Left cardiac atrium (tissue), 4 donors: ENCODE measurements at regions of chr4 and their contacts with region 1.

Region 1: GRCh38 chr4:104064646-104065577 is 345.1 kb upstream of the TACR3 start:
- DNase-seq: peak; percentile 28
- ATAC-seq: peak; percentile 60 to 80

Region 2: GRCh38 chr4:103982454-103982853 is 82.5 kb before region 1 on chr4:
- intact Hi-C with region 1: no loop called
- DNase-seq: no peak
- ATAC-seq: no peak

Region 3: GRCh38 chr4:104457308-104457981 is 392.5 kb after region 1 on chr4:
- intact Hi-C with region 1: no loop called
- DNase-seq: no peak
- ATAC-seq: no peak

Region 4: GRCh38 chr4:104531390-104531789 is 466.5 kb after region 1 on chr4:
- intact Hi-C with region 1: loop called in 1 of 2 experiments (anchors 5 kb)
- DNase-seq: no peak
- ATAC-seq: no peak

Region 5: DNA sequence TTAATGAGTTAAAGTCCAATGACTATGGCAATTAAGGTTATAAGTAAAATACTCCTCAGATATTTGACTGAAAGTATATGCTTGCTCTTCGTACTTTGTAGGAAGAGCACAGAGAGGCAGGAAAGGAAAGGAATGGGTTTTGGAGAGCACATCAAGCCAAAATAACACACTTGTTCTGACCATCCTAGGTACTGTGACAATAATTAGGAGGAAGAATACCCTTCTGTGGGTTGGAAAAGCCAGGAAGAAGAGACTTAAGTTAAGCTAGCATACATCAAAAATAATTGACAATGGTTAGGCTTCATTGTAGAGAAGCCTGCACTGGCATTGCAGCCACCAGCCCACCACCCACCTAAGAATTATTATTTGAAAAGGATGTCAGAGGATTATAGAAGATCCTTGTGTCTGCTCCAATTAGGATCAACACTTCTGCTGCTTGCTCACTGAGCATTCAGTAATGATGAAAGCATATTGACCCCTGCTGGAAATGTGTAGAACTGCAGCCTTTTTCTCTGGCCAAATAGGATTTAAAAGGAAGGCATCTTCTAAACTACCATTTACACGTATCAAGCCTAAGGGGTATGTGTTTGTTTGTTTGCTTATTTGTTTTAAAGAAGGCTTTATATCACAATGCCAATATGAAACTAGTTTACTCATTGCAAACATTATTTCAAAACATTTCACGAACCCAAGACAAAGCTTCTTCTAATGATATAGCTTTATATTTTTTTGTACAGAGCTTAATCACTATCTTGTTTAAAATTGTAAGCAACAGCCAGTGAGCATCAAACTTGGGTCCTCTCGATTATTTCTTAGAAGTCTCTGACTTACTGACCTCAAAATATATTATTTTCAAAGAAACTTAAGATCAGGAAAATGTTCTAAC is 795.6 kb after region 1 on chr4:
- intact Hi-C with region 1: loop called (anchors 2 to 5 kb)
- DNase-seq: no peak
- ATAC-seq: peak; percentile 71 to 80